ENCODE measurements at regions of chr21 and their contacts with region 1.

Region 1: DNA sequence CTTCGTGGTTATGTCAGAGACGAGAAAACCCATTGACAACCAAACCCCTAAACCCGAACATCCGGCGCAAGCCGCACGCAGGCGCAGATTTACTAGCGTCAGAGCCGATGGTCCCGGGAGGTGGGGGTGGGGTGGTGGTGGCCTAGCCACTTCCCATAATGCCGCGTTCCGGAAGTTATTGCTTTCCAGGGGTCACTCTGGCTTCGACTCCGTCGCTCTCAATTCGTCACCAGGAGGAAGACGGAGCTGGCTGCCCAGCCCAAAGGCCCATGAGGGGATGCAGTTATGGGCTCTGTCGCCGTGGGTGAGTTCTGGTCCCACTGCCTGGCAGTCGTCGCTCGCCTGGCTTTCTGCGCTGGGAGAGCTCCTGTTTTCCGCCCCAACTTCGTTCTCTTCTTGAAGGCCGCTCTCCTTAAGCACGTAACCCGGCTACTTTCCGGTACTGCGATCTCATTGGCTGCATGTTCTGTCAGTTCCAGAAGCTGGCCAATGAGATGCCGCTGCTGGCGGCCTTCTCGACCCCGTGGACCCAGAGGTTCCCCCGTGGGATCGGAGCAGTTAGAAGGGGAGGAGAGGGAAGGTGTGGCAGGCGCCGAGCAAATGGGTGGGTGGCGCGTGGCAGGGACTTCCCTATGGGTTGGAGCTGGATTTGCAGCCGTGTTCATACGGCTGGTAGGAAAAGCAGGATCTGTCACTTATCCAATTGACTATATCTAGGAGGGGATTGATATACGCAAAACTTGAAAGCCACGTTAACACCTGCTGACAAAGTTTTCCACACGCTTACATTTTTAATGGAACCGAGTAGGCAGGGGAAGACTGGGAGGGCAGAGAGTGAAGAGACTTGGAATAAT is at the start of gene USP16:
- DNase-seq: peak; percentile 94 to 98
- ATAC-seq: peak; percentile 99
- H3K4me3 ChIP-seq: peak within 1 kb of the TSS; percentile 78
- H3K27ac ChIP-seq: peak within 1 kb of the TSS; percentile 98 to 99
- H3K4me1 ChIP-seq: peaks cover 12% of the 10 kb centered on the region; the same call in 1 of the 3 replicates
- CTCF ChIP-seq: no peak
- EP300 ChIP-seq: no peak
- POLR2A ChIP-seq: peak; percentile 6; the same call in 1 of the 2 replicates
- RAD21 ChIP-seq: no peak
- polyA plus RNA-seq, gene USP16: 27.1 and 40.7 TPM in 2 replicates

Region 2: DNA sequence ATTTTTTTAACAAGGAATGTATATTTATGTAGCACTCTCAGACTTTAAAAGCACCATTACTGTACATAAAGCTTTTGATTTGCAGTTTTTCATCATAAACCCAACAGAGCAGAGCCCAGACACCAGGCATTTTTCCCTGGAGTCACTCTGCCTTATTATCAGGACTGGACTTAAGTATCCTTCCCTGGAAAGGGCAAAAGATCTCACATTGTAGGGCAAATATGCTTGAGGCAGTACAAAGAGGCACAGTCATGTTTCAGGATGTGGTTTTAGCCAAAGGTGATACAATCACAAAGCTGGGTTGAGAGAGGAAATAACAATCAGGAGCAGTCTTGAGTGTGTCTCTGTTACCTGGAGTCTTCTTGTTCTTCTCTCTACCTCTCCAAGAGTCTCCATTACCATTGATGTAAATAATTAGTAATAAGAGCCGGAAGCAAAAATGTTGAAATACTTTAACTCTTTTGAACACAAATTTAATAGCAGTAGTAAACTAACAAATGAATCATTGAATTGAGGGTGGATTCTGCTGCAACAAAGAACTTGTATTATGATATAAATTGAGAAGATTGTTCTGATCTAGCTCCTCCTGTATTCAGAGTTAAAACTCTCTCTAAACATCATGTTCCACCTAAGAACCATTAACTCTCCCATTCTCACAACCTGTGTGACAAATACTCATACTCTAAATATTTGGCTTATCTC is 192.5 kb before region 1 on chr21:
- CTCF ChIA-PET with region 1: no interaction called
- POLR2A ChIA-PET with region 1: no interaction called
- DNase-seq: no peak
- ATAC-seq: no peak
- H3K4me3 ChIP-seq: no peak overlapping the region
- H3K27ac ChIP-seq: no peak overlapping the region
- H3K4me1 ChIP-seq: no peaks in the 10 kb centered on the region
- CTCF ChIP-seq: no peak
- EP300 ChIP-seq: no peak
- POLR2A ChIP-seq: no peak
- RAD21 ChIP-seq: no peak

Region 3: GRCh38 chr21:28865488-28866186 is 159.1 kb before region 1 on chr21:
- CTCF ChIA-PET with region 1: no interaction called
- POLR2A ChIA-PET with region 1: no interaction called
- DNase-seq: no peak
- ATAC-seq: no peak
- H3K4me3 ChIP-seq: no peak overlapping the region
- H3K27ac ChIP-seq: no peak overlapping the region
- H3K4me1 ChIP-seq: no peaks in the 10 kb centered on the region
- CTCF ChIP-seq: no peak
- EP300 ChIP-seq: no peak
- POLR2A ChIP-seq: no peak
- RAD21 ChIP-seq: no peak

Region 4: DNA sequence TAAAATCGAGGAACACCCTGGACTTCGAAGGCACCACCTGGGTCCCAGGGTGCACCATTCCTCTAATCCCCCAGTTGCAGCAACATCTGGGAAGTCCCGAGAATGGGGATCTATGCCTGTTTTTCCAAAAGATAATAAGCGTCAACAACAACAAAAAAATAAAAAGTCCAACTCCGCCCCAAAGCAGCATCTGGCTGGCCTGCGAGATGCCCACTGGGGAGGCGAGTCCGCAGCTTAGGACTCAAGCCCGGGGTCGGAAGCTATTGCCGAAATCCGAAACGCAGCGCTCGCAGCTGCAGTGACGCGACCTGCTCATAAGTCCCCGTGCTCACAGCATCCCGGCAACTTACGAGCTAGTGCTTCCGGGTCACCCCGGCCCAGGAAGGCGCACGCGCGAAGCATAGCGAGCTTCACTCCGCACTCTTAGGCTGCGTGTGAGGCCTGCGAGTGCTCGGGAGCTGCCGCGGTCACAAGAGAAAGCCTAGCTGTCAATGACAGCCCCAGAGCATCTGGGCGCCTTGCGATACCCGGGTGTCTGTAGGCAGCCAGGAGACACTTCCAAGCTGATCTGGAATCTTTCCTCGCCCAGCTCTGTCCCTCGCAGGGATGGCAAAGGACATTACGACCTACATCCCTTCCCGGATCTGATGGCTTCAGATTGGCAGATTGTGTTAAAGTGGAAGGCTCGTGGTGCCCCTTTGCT is 22.1 kb before region 1 on chr21:
- CTCF ChIA-PET with region 1: interaction called, 3 read pairs
- POLR2A ChIA-PET with region 1: interaction called, 40 read pairs
- DNase-seq: peak; percentile 84 to 96
- ATAC-seq: peak; percentile 100
- H3K4me3 ChIP-seq: peak overlapping the region; percentile 81
- H3K27ac ChIP-seq: peak overlapping the region; percentile 86 to 93
- H3K4me1 ChIP-seq: no peaks in the 10 kb centered on the region
- CTCF ChIP-seq: no peak
- EP300 ChIP-seq: no peak
- POLR2A ChIP-seq: peak; percentile 98
- RAD21 ChIP-seq: no peak

Region 5: GRCh38 chr21:29073222-29074006 is 48.7 kb after region 1 on chr21 and contains the start of gene CCT8:
- CTCF ChIA-PET with region 1: no interaction called
- POLR2A ChIA-PET with region 1: interaction called, 18 read pairs
- DNase-seq: peak; percentile 58 to 98
- ATAC-seq: peak; percentile 92 to 94
- H3K4me3 ChIP-seq: peak within 1 kb of the TSS; percentile 74
- H3K27ac ChIP-seq: peak within 1 kb of the TSS; percentile 89 to 95
- H3K4me1 ChIP-seq: peaks cover 14% of the 10 kb centered on the region
- CTCF ChIP-seq: no peak
- EP300 ChIP-seq: no peak
- POLR2A ChIP-seq: peak; percentile 79
- RAD21 ChIP-seq: no peak
- polyA plus RNA-seq, gene CCT8: 235 and 296 TPM in 2 replicates

Region 6: GRCh38 chr21:29145354-29145782 is 120.7 kb after region 1 on chr21:
- CTCF ChIA-PET with region 1: no interaction called
- POLR2A ChIA-PET with region 1: no interaction called
- DNase-seq: peak; percentile 3 to 17
- ATAC-seq: peak; percentile 34 to 60; a peak in 2 of 6 replicates
- H3K4me3 ChIP-seq: no peak overlapping the region
- H3K27ac ChIP-seq: no peak overlapping the region
- H3K4me1 ChIP-seq: peaks cover 11% of the 10 kb centered on the region; the same call in 2 of the 3 replicates
- CTCF ChIP-seq: no peak
- EP300 ChIP-seq: no peak
- POLR2A ChIP-seq: no peak
- RAD21 ChIP-seq: no peak

Measured in A549 (cell line).